Posterior vena cava (tissue), 2 donors: ENCODE measurements at regions of chr20 and their contacts with region 1.

Region 1: GRCh38 chr20:56689288-56689687 is 60.2 kb downstream of the TFAP2C start:
- DNase-seq: no peak

Region 2: DNA sequence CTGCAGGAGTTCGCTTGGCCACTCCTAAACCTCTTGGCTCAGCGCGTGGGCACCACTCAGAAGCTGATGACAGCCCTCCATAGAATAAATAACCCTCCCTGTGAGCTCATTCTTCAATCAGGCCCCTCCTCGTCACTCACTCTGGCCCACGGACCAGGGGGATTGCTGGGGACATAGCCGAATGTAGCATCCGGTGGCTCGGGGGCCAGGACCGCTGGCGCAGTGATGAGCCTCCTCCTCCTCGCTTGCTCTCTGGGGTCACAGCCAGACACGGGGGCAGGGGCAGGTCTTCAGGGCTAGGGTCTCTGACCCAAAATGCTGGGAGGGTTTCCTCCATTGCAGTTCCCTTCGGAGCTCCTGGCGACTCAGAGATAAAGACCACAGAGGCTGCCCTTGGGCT is 19.7 kb after region 1 on chr20:
- intact Hi-C with region 1: loop called in 1 of 2 experiments (anchors 1 kb)
- DNase-seq: no peak

Region 3: DNA sequence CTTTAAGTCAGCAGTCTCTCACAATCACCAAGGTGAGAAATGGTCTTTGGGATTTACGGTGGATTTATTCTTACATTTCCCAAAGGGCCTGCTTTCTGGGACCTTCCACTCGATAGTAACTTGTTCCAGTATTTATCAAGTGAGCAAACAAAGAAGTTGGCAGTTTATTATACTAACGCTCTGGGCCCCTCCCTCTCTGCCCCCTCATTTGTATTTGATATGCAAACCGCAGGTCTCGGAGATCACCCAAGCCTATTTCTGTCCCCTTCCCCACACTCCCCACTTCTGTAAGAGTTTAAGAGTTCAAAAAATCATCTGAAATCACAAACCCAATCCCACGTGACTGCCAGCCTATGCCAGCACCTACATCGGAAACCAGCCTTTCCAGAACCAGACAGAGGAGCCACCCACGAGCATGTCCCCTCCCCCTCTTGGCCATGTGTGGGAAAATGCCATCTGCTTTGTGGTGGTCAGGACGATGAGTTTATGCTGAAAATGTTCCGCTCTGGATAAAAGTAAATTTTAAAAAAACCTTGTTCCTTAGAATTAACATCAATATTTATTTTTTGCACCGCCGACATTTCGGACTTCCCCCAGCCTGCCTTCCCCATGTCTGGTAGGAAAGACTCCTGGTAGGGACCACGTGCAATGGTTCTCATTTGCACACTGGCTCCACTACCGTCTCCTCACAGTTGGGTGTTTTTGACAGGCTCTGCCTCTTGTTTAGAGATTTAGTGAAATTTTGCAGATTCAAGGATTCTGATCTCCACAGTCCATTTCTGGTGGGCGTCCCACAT is 220.8 kb after region 1 on chr20:
- intact Hi-C with region 1: no loop called
- DNase-seq: no peak

Region 4: GRCh38 chr20:57388953-57389694 is 699.8 kb after region 1 on chr20:
- intact Hi-C with region 1: no loop called
- DNase-seq: peak; percentile 93